ENCODE measurements at regions of chr1 and their contacts with region 1.

Region 1: DNA sequence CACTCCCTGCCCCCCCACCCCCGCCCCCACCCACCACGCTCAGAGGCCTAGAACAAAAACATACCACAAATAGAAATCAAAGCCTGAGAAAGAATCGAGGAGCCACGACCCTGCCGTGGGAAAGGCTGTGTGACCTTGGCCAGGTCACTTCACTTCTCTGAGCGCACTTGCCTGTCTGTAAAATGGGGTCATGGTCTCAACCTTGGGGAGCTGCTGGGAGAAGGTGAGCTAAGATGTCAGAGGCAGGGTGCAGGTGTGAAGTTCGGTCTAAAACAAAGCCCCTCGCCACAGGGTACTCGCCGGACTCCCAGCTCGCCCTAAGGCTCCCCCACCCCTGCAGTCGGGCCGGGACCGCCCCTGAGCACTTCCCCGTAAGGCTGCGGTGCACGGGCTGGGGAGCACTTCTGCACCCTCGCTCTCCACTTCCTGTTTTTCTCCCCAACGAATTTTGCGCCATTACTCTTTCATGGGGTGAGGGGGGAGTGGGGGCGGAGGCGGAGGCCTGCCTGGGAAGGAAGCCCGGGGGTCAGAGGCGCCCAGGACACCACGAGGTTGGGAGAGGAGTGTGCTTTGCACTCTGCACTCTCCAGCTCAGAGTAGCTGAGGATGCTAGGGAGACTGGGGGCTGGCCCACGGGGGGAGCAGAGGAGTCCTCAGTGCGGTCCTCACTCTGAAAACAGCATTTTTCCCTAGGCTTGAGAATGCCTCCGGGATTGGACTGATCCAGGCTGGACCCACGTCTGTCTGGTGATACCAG is 21.9 kb upstream of the PIK3CD start:
- DNase-seq: no peak
- H3K4me3 ChIP-seq: no peak overlapping the region
- H3K4me3 Mint-ChIP-seq: no peak overlapping the region
- H3K27ac Mint-ChIP-seq: no peak overlapping the region
- H3K4me1 ChIP-seq: peaks cover 8% of the 10 kb centered on the region; the same call in 1 of the 2 replicates
- H3K4me1 Mint-ChIP-seq: no peaks in the 10 kb centered on the region
- H3K27me3 ChIP-seq: no peaks in the 10 kb centered on the region; the same call in 1 of the 2 replicates
- H3K27me3 Mint-ChIP-seq: peaks cover 3% of the 10 kb centered on the region
- CTCF ChIP-seq: no peak

Region 2: GRCh38 chr1:9615316-9616063 is 14.1 kb before region 1 on chr1:
- CTCF ChIA-PET with region 1: interaction called, 11 read pairs
- POLR2A ChIA-PET with region 1: no interaction called
- intact Hi-C with region 1: no loop called
- DNase-seq: peak; percentile 52 to 60
- H3K4me3 ChIP-seq: no peak overlapping the region
- H3K4me3 Mint-ChIP-seq: no peak overlapping the region
- H3K27ac Mint-ChIP-seq: no peak overlapping the region
- H3K4me1 ChIP-seq: no peaks in the 10 kb centered on the region
- H3K4me1 Mint-ChIP-seq: no peaks in the 10 kb centered on the region
- H3K27me3 ChIP-seq: no peaks in the 10 kb centered on the region
- H3K27me3 Mint-ChIP-seq: no peaks in the 10 kb centered on the region
- CTCF ChIP-seq: peak; percentile 62 to 77

Region 3: DNA sequence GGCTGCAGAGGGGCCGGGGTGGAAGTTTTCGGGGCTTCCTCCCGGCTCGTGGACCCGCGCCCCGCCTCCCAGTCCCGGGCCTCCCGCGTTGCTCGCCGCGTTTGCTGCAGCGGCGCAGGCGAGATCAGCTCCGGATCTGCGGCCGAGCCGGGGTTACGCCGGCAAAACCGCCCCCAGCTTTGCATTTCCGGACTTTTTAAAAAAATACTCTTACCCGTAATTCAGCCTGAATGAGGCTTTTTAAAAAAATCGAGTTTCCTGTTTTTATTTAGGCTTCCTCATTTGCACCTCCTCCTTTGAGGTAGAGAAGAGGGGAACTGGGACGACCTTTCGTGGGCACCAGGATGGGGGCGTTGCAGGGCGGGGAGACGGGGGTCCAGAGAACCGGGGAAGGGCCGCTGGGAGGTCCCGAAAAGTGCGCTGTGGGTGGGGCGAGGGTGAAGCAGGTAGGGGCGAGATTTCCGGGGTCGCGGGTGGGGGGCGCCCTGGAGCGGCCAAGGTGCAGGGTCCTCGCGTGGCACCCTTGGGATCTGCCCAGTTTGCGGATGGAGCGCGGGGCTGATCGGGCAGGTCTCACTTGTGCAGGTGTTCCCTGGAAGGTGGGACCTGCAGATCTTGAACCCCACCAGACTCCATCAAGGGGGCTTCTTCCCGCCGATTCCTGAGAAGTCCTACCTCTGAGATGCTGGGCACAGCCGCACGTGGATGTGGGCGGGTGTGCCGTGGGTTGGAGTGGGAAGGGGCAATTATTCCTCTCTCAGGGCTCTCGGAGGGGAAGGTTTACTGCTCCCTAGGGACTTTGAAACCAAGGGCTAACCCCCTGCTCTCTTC is 23.0 kb after region 1 on chr1:
- CTCF ChIA-PET with region 1: interaction called, 11 read pairs
- POLR2A ChIA-PET with region 1: no interaction called
- intact Hi-C with region 1: no loop called
- DNase-seq: no peak
- H3K4me3 ChIP-seq: peak overlapping the region; percentile 18; the same call in 1 of the 2 replicates
- H3K4me3 Mint-ChIP-seq: no peak overlapping the region
- H3K27ac Mint-ChIP-seq: no peak overlapping the region
- H3K4me1 ChIP-seq: 0 out of 2 replicates have a peak, but pooled peaks cover 7% of the 10 kb centered on the region
- H3K4me1 Mint-ChIP-seq: no peaks in the 10 kb centered on the region
- H3K27me3 ChIP-seq: 0 out of 2 replicates have a peak, but pooled peaks cover 2% of the 10 kb centered on the region
- H3K27me3 Mint-ChIP-seq: peaks cover 12% of the 10 kb centered on the region
- CTCF ChIP-seq: no peak

Region 4: GRCh38 chr1:9668080-9668479 is 38.5 kb after region 1 on chr1:
- CTCF ChIA-PET with region 1: no interaction called
- POLR2A ChIA-PET with region 1: no interaction called
- intact Hi-C with region 1: no loop called
- DNase-seq: no peak
- H3K4me3 ChIP-seq: no peak overlapping the region
- H3K4me3 Mint-ChIP-seq: no peak overlapping the region
- H3K27ac Mint-ChIP-seq: no peak overlapping the region
- H3K4me1 ChIP-seq: no peaks in the 10 kb centered on the region
- H3K4me1 Mint-ChIP-seq: no peaks in the 10 kb centered on the region
- H3K27me3 ChIP-seq: no peaks in the 10 kb centered on the region
- H3K27me3 Mint-ChIP-seq: peaks cover 2% of the 10 kb centered on the region
- CTCF ChIP-seq: no peak

Region 5: DNA sequence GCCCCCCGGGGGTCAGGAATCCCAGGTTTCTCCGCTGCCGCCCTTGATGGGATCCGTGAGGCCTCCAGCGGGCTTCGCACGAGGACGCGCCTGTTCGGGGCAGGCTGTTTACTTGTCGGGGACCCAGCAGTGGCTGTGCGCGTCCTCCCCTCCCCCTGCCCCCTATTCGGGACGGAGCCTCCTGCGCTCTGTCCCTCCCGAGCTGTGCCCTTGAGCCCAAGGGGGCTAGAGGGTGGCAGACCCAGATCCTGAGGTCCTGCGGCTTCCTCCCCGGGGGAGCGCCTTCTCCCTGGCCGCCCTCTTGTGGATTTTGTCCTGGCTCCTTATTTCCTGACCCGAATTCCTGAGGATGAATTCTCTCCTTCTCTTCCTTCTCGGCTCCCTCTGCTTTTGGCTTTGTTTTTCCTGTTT is 60.4 kb after region 1 on chr1:
- CTCF ChIA-PET with region 1: interaction called, 3 read pairs
- POLR2A ChIA-PET with region 1: no interaction called
- intact Hi-C with region 1: loop called (anchors 5 kb)
- DNase-seq: peak in 1 of 2 experiments; percentile 24
- H3K4me3 ChIP-seq: peak overlapping the region; percentile 47
- H3K4me3 Mint-ChIP-seq: peak overlapping the region; percentile 72
- H3K27ac Mint-ChIP-seq: peak overlapping the region; percentile 25
- H3K4me1 ChIP-seq: peaks cover 12% of the 10 kb centered on the region; the same call in 1 of the 2 replicates
- H3K4me1 Mint-ChIP-seq: peaks cover 7% of the 10 kb centered on the region
- H3K27me3 ChIP-seq: peaks cover 3% of the 10 kb centered on the region; the same call in 1 of the 2 replicates
- H3K27me3 Mint-ChIP-seq: peaks cover 16% of the 10 kb centered on the region
- CTCF ChIP-seq: no peak

Region 6: DNA sequence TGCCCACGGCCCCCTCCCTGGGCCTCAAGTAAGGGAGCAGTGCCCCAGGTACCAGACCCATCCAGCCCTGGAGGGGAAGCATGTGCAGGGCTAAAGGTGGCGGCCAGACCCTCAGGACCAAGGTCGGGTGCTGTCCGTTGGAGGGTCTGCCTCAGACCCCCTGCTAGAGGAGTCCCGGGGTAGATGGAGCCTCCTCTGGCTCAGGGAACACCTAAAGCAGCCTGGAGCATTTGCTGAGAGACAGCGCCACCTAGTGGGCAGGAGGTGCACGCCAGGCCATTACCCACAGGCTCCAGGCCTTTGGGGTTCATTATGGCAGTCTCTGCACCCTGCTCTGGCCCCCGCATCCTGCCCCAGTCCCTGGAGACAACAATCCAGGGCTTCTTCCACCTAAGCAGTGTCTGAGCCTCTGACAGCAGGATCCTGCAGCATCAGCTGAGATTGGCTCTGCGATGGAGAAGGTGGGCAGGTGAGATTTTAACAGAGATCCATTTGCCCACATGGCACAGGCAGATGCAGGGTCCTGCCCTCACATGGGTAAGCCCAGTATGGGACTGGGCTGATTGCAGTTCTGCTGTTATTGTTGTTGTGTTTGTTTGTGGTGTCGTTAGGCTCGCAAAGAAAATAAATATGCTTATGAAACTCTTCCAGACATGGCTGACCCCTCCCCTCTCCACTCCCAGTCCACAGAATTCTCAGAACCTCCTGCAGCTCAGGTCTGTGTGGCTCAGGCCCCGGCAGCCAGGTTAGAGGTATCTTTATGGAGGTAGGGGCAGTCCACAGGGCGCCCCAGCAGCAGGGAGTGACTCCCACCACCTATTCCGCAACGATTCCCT is 238.0 kb after region 1 on chr1:
- CTCF ChIA-PET with region 1: interaction called, 3 read pairs
- POLR2A ChIA-PET with region 1: no interaction called
- intact Hi-C with region 1: loop called (anchors 1 kb)
- DNase-seq: peak; percentile 68 to 82
- H3K4me3 ChIP-seq: no peak overlapping the region
- H3K4me3 Mint-ChIP-seq: no peak overlapping the region
- H3K27ac Mint-ChIP-seq: no peak overlapping the region
- H3K4me1 ChIP-seq: no peaks in the 10 kb centered on the region
- H3K4me1 Mint-ChIP-seq: no peaks in the 10 kb centered on the region
- H3K27me3 ChIP-seq: no peaks in the 10 kb centered on the region
- H3K27me3 Mint-ChIP-seq: no peaks in the 10 kb centered on the region
- CTCF ChIP-seq: peak; percentile 89 to 95

Measured in Caco-2 (cell line).